Left cardiac atrium (tissue), 4 donors: ENCODE measurements at regions of chr7 and their contacts with region 1.

Region 1: DNA sequence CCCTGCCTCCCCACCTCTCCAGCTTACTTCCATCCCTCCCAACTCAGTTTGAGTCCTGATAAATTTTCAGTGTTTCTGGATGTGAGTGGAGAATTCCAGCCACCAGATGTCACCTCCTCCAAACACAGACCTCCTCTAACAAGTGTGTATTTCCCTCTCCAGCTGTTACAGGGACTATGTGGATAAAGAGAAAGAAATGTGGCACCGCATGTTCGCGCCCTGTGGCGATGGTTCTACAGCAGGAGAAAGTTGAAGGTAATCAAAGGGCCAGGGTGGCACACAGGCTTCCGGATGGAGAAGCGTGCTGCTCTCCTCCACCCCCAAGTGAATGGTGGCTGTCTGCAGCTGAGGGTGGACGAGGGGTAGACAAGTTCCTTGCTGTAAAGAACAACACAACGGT is 14.7 kb downstream of the FKBP6 start:
- DNase-seq: no peak
- ATAC-seq: peak; percentile 81 to 86

Region 2: DNA sequence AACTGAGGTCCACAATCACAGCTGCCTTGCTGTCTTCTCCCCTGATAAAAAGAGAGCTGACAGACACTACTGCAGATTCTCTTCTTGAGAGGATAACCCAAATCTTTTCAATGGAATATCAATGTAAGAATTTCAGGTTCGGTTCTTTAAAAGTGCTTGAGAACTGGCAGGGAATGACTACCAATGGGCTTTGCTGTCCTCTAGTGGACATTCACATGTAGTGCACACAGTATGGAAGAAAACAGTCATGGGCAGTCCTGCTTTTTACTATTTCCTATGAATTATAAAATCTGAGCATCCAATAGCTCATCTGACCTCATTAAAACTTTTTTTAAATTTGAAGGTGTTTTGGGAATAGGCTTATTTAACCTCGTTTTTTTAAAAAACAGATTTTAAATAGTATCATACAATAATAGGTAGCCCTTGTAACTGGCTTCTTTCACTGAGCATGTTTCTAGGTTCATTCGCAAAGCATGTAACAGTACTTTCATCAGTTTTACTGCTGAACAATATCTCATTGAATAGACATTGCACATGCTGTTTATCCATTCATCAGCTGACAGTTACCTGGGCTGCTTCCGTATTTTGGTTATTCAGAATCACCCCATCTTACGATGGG is 109.2 kb after region 1 on chr7:
- intact Hi-C with region 1: loop called in 1 of 2 experiments (anchors 5 kb)
- DNase-seq: no peak
- ATAC-seq: peak; percentile 66 to 67